Caco-2 (cell line): ENCODE measurements at regions of chr17 and their contacts with region 1.

Region 1: DNA sequence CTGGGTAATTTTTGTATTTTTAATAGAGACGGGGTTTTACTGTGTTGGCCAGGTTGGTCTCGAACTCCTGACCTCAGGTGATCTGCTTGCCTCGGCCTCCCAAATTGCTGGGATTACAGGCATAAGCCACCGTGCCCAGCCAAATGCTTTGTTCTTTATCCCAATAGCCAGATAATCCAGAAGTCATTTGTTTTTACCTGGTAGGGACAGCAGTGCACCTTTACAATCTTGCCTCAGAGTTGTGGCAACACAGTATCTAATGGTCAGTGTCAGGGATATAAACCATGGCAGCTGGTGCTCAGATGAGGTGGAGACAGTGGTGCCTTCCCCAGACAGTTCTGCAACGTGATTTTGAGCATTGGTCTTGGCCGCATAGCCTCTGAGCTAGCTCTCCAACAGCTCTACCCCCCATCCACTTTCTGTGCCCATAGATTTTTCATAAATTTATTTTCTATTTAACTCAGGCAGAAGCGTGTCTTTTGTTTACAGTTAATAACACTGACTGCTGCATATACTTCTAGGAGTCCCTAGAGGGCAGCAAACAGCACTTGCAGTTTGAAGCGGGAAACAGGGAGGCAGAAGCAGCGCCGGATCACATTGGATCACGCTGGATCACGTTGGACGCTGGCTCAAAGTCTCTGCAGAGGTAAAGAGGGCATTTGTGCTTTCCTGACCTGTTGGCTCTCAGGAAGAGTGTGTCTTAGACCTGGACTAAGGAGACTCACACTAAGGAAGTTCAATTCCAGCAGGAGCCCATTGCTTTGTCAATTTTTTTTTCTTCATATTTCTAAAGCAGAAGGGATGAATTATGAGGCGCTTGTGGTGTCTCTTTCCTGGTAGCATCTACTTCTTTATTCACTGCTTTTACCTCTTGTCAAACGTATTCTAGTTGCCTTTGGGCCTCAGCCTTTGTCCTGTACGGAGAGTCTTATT is 5.1 kb upstream of the GGT6 start:
- DNase-seq: peak; percentile 60 to 64
- H3K4me3 ChIP-seq: no peak overlapping the region
- H3K4me3 Mint-ChIP-seq: peak overlapping the region; percentile 45
- H3K27ac Mint-ChIP-seq: no peak overlapping the region
- H3K4me1 ChIP-seq: peaks cover 5% of the 10 kb centered on the region; the same call in 1 of the 2 replicates
- H3K4me1 Mint-ChIP-seq: peaks cover 6% of the 10 kb centered on the region
- H3K27me3 ChIP-seq: no peaks in the 10 kb centered on the region
- H3K27me3 Mint-ChIP-seq: no peaks in the 10 kb centered on the region
- CTCF ChIP-seq: peak in 1 of 2 experiments; percentile 60

Region 2: DNA sequence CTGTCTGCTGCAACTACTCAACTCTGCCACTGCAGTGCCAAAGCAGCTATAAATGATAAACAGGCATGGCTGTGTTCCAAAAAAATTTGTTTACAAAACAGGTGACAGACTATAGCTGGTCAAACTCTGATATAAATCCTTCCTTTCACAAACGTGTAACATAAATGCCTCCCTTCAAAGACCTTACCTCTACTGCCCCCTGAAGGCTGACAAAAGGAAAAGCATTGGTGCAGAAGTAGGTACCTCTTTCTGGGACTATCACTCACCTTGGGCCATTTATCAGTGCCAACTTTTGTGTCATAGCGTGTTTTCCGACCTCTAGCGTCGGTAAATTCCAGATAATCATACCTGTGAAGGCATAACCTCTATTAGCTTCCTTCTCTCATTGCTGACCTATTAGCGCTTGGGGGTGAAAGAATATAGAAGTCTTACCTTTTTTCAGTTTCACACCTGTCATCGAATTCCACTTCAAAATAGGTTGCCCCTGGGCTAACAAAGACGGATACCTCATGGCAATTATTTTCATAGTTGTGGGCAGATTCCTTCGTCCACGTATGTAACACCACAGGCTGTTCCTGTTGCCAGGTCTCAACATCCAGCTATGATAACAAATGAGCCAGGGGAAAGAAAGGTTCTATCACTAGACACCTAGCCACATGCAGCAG is 490.5 kb before region 1 on chr17:
- CTCF ChIA-PET with region 1: no interaction called
- POLR2A ChIA-PET with region 1: no interaction called
- intact Hi-C with region 1: no loop called
- DNase-seq: peak in 1 of 2 experiments; percentile 21
- H3K4me3 ChIP-seq: no peak overlapping the region
- H3K4me3 Mint-ChIP-seq: no peak overlapping the region
- H3K27ac Mint-ChIP-seq: no peak overlapping the region
- H3K4me1 ChIP-seq: no peaks in the 10 kb centered on the region
- H3K4me1 Mint-ChIP-seq: no peaks in the 10 kb centered on the region
- H3K27me3 ChIP-seq: no peaks in the 10 kb centered on the region
- H3K27me3 Mint-ChIP-seq: no peaks in the 10 kb centered on the region
- CTCF ChIP-seq: peak; percentile 17 to 46

Region 3: DNA sequence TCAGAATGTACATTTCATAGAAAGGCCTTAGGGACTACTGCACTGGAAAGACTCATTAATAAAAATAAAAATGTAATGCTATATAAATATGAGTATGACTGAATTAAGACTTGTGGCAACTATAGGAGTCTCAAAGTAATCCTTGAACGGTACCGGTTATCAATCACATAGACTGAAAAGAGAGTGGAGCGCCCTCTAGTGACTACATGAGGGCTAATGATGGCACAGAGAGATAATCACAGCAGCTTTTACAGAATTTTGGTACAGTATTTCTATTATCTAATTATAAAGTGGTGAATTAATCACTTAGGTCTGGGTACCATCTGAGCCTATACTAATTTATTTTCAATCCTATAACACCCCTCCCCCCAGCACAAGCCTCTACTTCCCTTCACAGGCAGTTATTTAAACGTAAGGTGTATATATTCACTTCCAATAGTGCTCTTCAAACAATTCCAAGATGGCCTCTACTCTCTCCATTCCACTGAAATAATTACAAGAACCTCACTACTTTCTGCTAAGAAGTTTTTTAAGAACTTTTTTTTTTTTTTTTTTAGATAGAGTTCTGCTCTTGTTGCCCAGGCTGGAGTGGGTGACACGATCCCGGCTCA is 261.0 kb before region 1 on chr17:
- CTCF ChIA-PET with region 1: no interaction called
- POLR2A ChIA-PET with region 1: no interaction called
- intact Hi-C with region 1: no loop called
- DNase-seq: peak in 1 of 2 experiments; percentile 32
- H3K4me3 ChIP-seq: no peak overlapping the region
- H3K4me3 Mint-ChIP-seq: no peak overlapping the region
- H3K27ac Mint-ChIP-seq: no peak overlapping the region
- H3K4me1 ChIP-seq: no peaks in the 10 kb centered on the region
- H3K4me1 Mint-ChIP-seq: no peaks in the 10 kb centered on the region
- H3K27me3 ChIP-seq: no peaks in the 10 kb centered on the region
- H3K27me3 Mint-ChIP-seq: no peaks in the 10 kb centered on the region
- CTCF ChIP-seq: peak; percentile 46 to 47

Region 4: DNA sequence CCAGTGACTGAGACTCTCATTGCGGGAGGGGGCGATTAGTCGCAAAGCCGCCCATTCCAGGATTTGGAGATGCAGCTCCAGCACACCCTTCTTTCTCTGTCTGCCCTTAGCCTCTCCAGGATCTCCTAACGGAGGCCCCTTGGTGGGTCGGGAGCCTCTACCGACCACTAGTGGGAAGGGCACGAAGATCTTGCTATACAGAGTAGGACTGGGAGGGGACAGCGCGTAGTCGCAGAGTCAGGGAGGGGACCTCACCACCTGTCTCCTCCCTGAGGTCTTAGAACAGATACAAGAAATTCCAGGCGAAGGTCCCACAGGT is 18.3 kb after region 1 on chr17:
- CTCF ChIA-PET with region 1: interaction called, 11 read pairs
- POLR2A ChIA-PET with region 1: no interaction called
- intact Hi-C with region 1: loop called (anchors 2 kb)
- DNase-seq: peak; percentile 76 to 77
- H3K4me3 ChIP-seq: peak overlapping the region; percentile 71
- H3K4me3 Mint-ChIP-seq: peak overlapping the region; percentile 84
- H3K27ac Mint-ChIP-seq: peak overlapping the region; percentile 75
- H3K4me1 ChIP-seq: peaks cover 19% of the 10 kb centered on the region; the same call in 1 of the 2 replicates
- H3K4me1 Mint-ChIP-seq: peaks cover 12% of the 10 kb centered on the region
- H3K27me3 ChIP-seq: no peaks in the 10 kb centered on the region
- H3K27me3 Mint-ChIP-seq: no peaks in the 10 kb centered on the region
- CTCF ChIP-seq: peak; percentile 26 to 45

Region 5: DNA sequence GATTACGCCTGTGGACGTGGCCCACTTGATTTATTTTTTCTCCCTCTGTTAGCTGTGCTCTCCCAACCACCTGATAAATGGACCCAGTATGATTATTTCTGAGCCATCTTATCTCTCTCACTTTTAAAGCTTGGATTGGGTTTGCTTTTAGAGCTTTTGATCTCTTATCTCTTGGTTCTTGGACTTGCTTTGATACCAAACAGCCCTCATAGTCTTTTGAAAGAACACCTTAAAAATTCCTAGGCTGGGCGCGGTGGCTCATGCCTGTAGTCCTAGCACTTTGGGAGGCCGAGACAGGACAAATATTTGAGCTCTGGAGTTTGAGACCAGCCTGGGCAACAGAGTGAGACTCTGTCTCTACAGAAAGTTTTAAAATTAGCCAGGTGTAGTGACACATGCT is 44.7 kb after region 1 on chr17:
- CTCF ChIA-PET with region 1: interaction called, 14 read pairs
- POLR2A ChIA-PET with region 1: interaction called, 3 read pairs
- intact Hi-C with region 1: no loop called
- DNase-seq: peak; percentile 83 to 89
- H3K4me3 ChIP-seq: peak overlapping the region; percentile 45
- H3K4me3 Mint-ChIP-seq: peak overlapping the region; percentile 93
- H3K27ac Mint-ChIP-seq: peak overlapping the region; percentile 99
- H3K4me1 ChIP-seq: peaks cover 31% of the 10 kb centered on the region
- H3K4me1 Mint-ChIP-seq: peaks cover 6% of the 10 kb centered on the region
- H3K27me3 ChIP-seq: no peaks in the 10 kb centered on the region
- H3K27me3 Mint-ChIP-seq: no peaks in the 10 kb centered on the region
- CTCF ChIP-seq: no peak

Region 6: DNA sequence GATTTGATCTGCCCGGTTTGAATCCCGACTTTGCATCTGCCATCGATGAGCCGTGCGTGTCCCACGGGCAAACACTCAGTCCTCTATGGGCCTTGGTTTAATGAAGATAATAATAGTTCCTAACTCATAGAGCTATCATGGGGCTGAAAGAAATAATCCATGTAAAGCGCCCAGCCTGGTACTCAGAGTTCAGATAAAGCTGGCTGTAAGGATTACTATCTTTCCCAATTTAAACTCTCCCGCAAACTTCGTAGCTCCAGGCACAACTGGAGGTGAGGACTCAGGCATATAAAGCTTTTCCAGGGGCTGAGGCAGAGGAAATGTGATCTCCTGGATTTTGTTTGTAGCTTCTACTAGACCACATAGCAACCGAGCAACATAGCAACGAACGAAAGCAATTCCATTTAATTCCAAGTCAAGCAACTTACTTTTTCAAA is 59.7 kb after region 1 on chr17:
- CTCF ChIA-PET with region 1: interaction called, 22 read pairs
- POLR2A ChIA-PET with region 1: no interaction called
- intact Hi-C with region 1: loop called (anchors 1 kb)
- DNase-seq: no peak
- H3K4me3 ChIP-seq: no peak overlapping the region
- H3K4me3 Mint-ChIP-seq: no peak overlapping the region
- H3K27ac Mint-ChIP-seq: no peak overlapping the region
- H3K4me1 ChIP-seq: no peaks in the 10 kb centered on the region
- H3K4me1 Mint-ChIP-seq: peaks cover 5% of the 10 kb centered on the region
- H3K27me3 ChIP-seq: no peaks in the 10 kb centered on the region
- H3K27me3 Mint-ChIP-seq: no peaks in the 10 kb centered on the region
- CTCF ChIP-seq: no peak

Region 7: GRCh38 chr17:4696437-4696805 is 130.9 kb after region 1 on chr17:
- CTCF ChIA-PET with region 1: no interaction called
- POLR2A ChIA-PET with region 1: no interaction called
- intact Hi-C with region 1: loop called (anchors 10 kb)
- DNase-seq: no peak
- H3K4me3 ChIP-seq: no peak overlapping the region
- H3K4me3 Mint-ChIP-seq: no peak overlapping the region
- H3K27ac Mint-ChIP-seq: no peak overlapping the region
- H3K4me1 ChIP-seq: no peaks in the 10 kb centered on the region
- H3K4me1 Mint-ChIP-seq: no peaks in the 10 kb centered on the region
- H3K27me3 ChIP-seq: no peaks in the 10 kb centered on the region
- H3K27me3 Mint-ChIP-seq: no peaks in the 10 kb centered on the region
- CTCF ChIP-seq: no peak

Region 8: GRCh38 chr17:5468075-5468473 is 902.6 kb after region 1 on chr17:
- CTCF ChIA-PET with region 1: no interaction called
- POLR2A ChIA-PET with region 1: no interaction called
- intact Hi-C with region 1: no loop called
- DNase-seq: no peak
- H3K4me3 ChIP-seq: peak overlapping the region; percentile 76
- H3K4me3 Mint-ChIP-seq: peak overlapping the region; percentile 91
- H3K27ac Mint-ChIP-seq: peak overlapping the region; percentile 46
- H3K4me1 ChIP-seq: no peaks in the 10 kb centered on the region
- H3K4me1 Mint-ChIP-seq: peaks cover 14% of the 10 kb centered on the region
- H3K27me3 ChIP-seq: no peaks in the 10 kb centered on the region
- H3K27me3 Mint-ChIP-seq: no peaks in the 10 kb centered on the region
- CTCF ChIP-seq: no peak